ENCODE measurements at regions of chr19 and their contacts with region 1.

Region 1: DNA sequence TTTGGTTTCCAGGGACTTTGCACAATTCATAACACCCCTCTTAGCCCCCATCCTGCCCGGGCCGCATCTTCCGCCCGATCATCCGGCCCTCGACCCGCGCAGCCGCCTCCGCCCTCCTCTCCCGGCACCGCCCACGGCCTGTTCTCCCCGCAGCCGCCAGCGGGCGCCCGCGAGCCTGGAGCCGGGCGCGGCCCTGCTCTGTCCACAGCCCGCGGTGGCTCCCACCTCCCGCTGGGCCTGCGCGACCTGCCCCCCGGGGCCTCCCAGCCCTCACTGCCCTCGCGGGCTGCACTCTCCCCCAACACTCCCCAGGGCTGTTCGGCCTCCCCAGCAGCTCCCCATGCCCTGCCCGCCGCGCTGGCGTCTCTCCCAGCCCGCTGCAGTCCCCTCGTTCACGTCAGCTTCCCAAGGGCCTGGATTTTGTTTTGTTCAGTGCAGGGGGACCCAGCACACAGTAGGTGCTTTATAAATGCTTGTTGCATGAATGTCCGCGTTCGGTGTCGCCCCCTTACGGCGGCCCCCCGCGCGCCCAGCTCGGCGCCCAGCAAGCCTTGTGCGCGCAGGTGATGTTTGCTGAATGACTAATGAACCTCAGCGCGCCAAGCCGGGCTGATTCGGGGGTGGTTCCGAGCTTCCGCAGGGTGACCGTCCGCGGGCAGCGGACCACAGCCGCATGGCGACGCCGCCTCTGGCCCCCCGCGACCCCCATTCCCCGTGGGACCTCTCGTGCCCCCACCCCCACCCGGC is 4.6 kb upstream of the APC2 start:
- DNase-seq: peak; percentile 68 to 82 (median 74)
- H3K4me3 ChIP-seq: peak overlapping the region in 1 of 2 donors; percentile 57
- H3K4me3 Mint-ChIP-seq: peak overlapping the region; percentile 53 to 82 (median 70)
- H3K27ac ChIP-seq: peak overlapping the region; percentile 22
- H3K27ac Mint-ChIP-seq: peak overlapping the region in 4 of 7 donors; percentile 25 to 99 (median 54)
- H3K4me1 ChIP-seq: peaks cover 40% of the 10 kb centered on the region
- H3K4me1 Mint-ChIP-seq: peaks cover 4 to 47% (median 16%) of the 10 kb centered on the region in 4 donors
- H3K27me3 ChIP-seq: peaks cover 27% of the 10 kb centered on the region
- H3K27me3 Mint-ChIP-seq: peaks cover 17 to 20% of the 10 kb centered on the region in 2 donors

Region 2: GRCh38 chr19:1455336-1456120 is 10.2 kb after region 1 on chr19:
- CTCF ChIA-PET with region 1: interaction called, 3 read pairs
- POLR2A ChIA-PET with region 1: interaction called, 20 read pairs
- intact Hi-C with region 1: no loop called
- DNase-seq: peak; percentile 51 to 70 (median 55)
- H3K4me3 ChIP-seq: no peak overlapping the region
- H3K4me3 Mint-ChIP-seq: peak overlapping the region in 6 of 8 donors; percentile 32 to 61 (median 56)
- H3K27ac ChIP-seq: no peak overlapping the region
- H3K27ac Mint-ChIP-seq: peak overlapping the region in 3 of 7 donors; percentile 62 to 87 (median 74)
- H3K4me1 ChIP-seq: peaks cover 19% of the 10 kb centered on the region
- H3K4me1 Mint-ChIP-seq: peaks cover 6 to 17% (median 12%) of the 10 kb centered on the region in 4 donors
- H3K27me3 ChIP-seq: peaks cover 11% of the 10 kb centered on the region
- H3K27me3 Mint-ChIP-seq: peaks cover 20 to 38% of the 10 kb centered on the region in 2 donors

Region 3: DNA sequence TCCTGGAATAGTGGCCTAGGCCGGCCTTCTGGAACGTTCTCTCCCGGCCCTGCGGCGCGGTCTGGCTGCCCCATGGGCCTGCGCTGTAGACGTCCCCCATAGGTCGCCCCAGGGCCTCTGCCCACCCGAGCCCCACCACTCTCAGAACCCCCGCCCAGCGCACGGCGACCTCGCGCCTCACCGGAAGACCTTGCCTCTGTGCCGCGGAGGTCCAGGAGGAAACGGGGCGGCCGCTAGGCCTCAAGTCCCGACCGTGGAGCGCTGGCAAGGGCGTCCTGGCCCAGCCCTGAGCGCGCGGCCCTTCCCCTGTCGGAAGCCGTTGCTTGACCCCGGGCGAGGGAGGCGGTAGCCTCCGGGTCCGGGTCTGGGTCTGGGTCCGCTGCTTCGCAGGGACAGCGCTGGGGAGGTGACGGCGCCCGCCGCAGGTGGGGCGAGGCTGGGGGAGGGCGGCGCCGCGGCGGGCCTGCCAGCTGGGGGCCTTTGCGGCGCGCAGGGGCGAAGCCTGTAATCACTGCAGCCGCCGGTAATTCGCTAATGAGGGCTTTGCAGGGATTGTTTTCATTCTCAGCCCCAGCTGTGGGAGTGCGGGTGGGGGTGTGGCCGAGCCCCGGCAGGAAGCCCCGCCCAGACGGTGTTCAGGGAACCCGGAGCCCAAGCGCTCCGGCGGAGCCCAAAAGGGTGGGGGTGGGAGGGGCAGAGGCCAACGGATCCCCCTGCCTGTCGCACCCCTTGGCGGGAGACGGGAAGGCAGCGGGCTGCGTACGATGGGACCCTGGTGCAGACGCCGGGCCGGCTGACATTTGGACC is 25.0 kb after region 1 on chr19:
- CTCF ChIA-PET with region 1: interaction called, 9 read pairs
- POLR2A ChIA-PET with region 1: interaction called, 12 read pairs
- intact Hi-C with region 1: loop called (anchors 2 kb)
- DNase-seq: peak; percentile 66 to 80 (median 70)
- H3K4me3 ChIP-seq: peak overlapping the region; percentile 57 to 58
- H3K4me3 Mint-ChIP-seq: peak overlapping the region; percentile 67 to 83 (median 77)
- H3K27ac ChIP-seq: no peak overlapping the region
- H3K27ac Mint-ChIP-seq: peak overlapping the region in 1 of 7 donors; percentile 58
- H3K4me1 ChIP-seq: peaks cover 54% of the 10 kb centered on the region
- H3K4me1 Mint-ChIP-seq: peaks cover 3 to 21% (median 8%) of the 10 kb centered on the region in 4 donors
- H3K27me3 ChIP-seq: no peaks in the 10 kb centered on the region
- H3K27me3 Mint-ChIP-seq: peaks cover 0 to 1% of the 10 kb centered on the region in 2 donors

Region 4: GRCh38 chr19:1513499-1514294 is 68.3 kb after region 1 on chr19:
- CTCF ChIA-PET with region 1: interaction called, 3 read pairs
- POLR2A ChIA-PET with region 1: no interaction called
- intact Hi-C with region 1: loop called (anchors 1 kb)
- DNase-seq: peak; percentile 60 to 69 (median 68)
- H3K4me3 ChIP-seq: no peak overlapping the region
- H3K4me3 Mint-ChIP-seq: peak overlapping the region in 3 of 8 donors; percentile 20 to 41 (median 29)
- H3K27ac ChIP-seq: no peak overlapping the region
- H3K27ac Mint-ChIP-seq: no peak overlapping the region
- H3K4me1 ChIP-seq: peaks cover 13% of the 10 kb centered on the region
- H3K4me1 Mint-ChIP-seq: peaks cover 5 to 19% (median 8%) of the 10 kb centered on the region in 4 donors
- H3K27me3 ChIP-seq: no peaks in the 10 kb centered on the region
- H3K27me3 Mint-ChIP-seq: peaks cover 0 to 12% of the 10 kb centered on the region in 2 donors

Measured in CD4-positive, alpha-beta memory T cell (primary cell).